Heart right ventricle (tissue), 16 donors: ENCODE measurements at regions of chr4 and their contacts with region 1.

Region 1: DNA sequence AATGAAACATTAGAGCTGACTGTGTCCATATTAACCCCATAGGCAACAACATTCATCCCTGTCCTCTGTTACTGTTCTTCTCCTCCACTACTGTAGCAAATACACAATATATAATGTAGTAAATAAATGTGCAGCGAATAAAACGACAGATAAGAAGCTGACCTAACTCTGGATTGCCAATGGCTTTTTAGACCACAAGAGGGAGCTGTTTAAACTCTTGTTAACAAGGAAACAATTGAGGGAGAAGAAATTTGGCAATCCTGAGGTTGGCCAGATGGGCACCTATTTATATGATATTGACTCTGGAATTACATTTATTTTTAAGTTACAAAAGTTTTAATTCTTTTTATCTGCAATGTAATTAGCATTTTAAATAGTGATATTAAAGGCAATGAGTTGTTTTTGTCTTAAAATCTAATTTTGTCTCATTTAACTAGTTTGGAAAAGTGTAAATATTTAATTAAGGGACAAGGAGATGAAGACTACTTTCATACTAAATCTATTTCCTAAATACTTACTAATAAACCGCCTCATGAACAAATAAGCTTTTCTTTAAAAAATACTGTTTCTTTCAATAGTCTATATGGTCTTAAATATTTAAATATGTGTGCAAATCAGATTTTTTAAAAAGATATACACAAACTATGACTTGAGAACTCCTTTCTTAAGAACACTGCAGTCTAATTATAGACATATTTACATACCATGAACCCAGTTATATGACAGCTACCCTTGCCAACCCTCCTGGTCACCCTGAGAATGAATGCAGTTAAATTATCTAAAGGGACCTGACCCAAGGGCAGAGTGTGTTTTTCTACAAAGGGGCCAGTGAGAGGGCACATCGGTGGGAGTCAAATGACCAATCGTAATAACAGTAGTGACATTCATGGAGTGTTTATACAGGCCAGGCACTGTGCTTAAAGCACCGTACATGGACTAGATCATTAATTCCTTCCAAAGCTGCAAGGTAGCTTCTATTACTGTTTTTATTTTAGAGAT is 52.9 kb upstream of the HPF1 start:
- DNase-seq: peak in 1 of 2 donors; percentile 65
- ATAC-seq: peak in 2 of 8 donors; percentile 37 to 57
- H3K4me3 ChIP-seq: no peak overlapping the region
- H3K27ac ChIP-seq: no peak overlapping the region
- H3K4me1 ChIP-seq: peaks cover 0 to 4% (median 0%) of the 10 kb centered on the region in 9 donors
- H3K27me3 ChIP-seq: peaks cover 0 to 14% (median 4%) of the 10 kb centered on the region in 7 donors
- CTCF ChIP-seq: peak; percentile 67 to 90 (median 84)

Region 2: GRCh38 chr4:169540774-169541173 is 269.9 kb before region 1 on chr4:
- intact Hi-C with region 1: no loop called
- DNase-seq: no peak
- ATAC-seq: no peak
- H3K4me3 ChIP-seq: no peak overlapping the region
- H3K27ac ChIP-seq: no peak overlapping the region
- H3K4me1 ChIP-seq: no peaks in the 10 kb centered on the region
- H3K27me3 ChIP-seq: no peaks in the 10 kb centered on the region
- CTCF ChIP-seq: no peak

Region 3: DNA sequence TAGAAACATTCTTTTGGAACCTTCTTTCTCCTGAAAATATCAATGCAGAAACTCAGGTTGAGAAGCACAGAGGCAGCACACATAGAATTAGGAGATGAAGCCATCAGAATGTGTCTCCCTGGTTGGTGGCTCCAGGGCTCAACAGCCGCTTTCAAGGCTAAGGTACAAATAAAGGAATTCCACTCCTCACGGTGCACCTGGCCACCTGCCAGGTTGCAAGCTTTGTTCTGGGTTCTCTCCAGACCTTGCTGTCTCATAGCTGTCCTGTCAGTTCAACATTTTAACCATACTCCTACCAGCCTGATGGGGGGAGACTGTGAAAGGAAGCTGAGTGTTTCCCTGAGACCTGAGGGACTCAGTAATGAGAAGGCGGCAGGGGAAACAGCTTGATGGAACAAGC is 43.5 kb after region 1 on chr4:
- intact Hi-C with region 1: no loop called
- DNase-seq: no peak
- ATAC-seq: no peak
- H3K4me3 ChIP-seq: no peak overlapping the region
- H3K27ac ChIP-seq: no peak overlapping the region
- H3K4me1 ChIP-seq: no peaks in the 10 kb centered on the region
- H3K27me3 ChIP-seq: peaks cover 0 to 4% (median 0%) of the 10 kb centered on the region in 7 donors
- CTCF ChIP-seq: no peak

Region 4: DNA sequence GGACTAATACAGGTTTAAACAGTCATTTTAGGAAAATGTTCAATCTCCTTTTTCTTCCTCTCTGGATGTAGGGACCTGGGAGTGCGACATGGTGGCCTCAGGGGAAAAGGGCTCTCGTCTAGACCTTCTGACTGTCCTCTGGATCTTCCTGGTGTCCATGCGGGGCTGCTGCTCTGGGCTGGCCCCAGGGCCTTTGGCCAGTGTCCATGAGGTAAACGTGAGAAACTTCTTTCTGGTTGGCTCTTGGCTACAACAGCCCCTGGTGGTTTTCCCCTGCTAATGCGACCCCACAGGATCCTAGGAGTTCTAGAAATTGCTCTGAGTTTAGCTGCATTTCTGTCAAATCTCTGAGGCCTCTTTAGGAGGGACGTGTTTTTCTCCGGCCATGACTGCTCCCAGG is 129.8 kb after region 1 on chr4:
- intact Hi-C with region 1: no loop called
- DNase-seq: no peak
- ATAC-seq: no peak
- H3K4me3 ChIP-seq: no peak overlapping the region
- H3K27ac ChIP-seq: no peak overlapping the region
- H3K4me1 ChIP-seq: no peaks in the 10 kb centered on the region
- H3K27me3 ChIP-seq: no peaks in the 10 kb centered on the region
- CTCF ChIP-seq: no peak

Region 5: GRCh38 chr4:170040031-170040680 is 229.5 kb after region 1 on chr4:
- intact Hi-C with region 1: loop called in 1 of 10 experiments (anchors 5 kb)
- DNase-seq: no peak
- ATAC-seq: no peak
- H3K4me3 ChIP-seq: no peak overlapping the region
- H3K27ac ChIP-seq: no peak overlapping the region
- H3K4me1 ChIP-seq: no peaks in the 10 kb centered on the region
- H3K27me3 ChIP-seq: peaks cover 0 to 4% (median 0%) of the 10 kb centered on the region in 7 donors
- CTCF ChIP-seq: no peak

Region 6: GRCh38 chr4:170047771-170048354 is 237.2 kb after region 1 on chr4:
- intact Hi-C with region 1: loop called in 9 of 10 experiments (anchors 1 to 5 kb)
- DNase-seq: peak in 1 of 2 donors; percentile 52
- ATAC-seq: no peak
- H3K4me3 ChIP-seq: no peak overlapping the region
- H3K27ac ChIP-seq: no peak overlapping the region
- H3K4me1 ChIP-seq: no peaks in the 10 kb centered on the region
- H3K27me3 ChIP-seq: peaks cover 0 to 10% (median 0%) of the 10 kb centered on the region in 7 donors
- CTCF ChIP-seq: peak; percentile 59 to 86 (median 82)

Region 7: GRCh38 chr4:170089668-170090351 is 279.2 kb after region 1 on chr4 and contains the start of gene AADAT:
- intact Hi-C with region 1: loop called in 1 of 10 experiments (anchors 2 kb)
- DNase-seq: peak; percentile 74 to 80
- ATAC-seq: peak; percentile 95 to 99 (median 98)
- H3K4me3 ChIP-seq: peak within 1 kb of the TSS; percentile 35 to 83 (median 64)
- H3K27ac ChIP-seq: peak within 1 kb of the TSS; percentile 36 to 75 (median 62)
- H3K4me1 ChIP-seq: peaks cover 0 to 14% (median 8%) of the 10 kb centered on the region in 9 donors
- H3K27me3 ChIP-seq: peaks cover 0 to 39% (median 0%) of the 10 kb centered on the region in 7 donors
- CTCF ChIP-seq: peak; percentile 45 to 84 (median 66)
- total RNA-seq, gene AADAT: 0.82 to 2.7 (median 1.7) TPM